PC-9 (cell line): ENCODE measurements at regions of chr9 and their contacts with region 1.

Region 1: DNA sequence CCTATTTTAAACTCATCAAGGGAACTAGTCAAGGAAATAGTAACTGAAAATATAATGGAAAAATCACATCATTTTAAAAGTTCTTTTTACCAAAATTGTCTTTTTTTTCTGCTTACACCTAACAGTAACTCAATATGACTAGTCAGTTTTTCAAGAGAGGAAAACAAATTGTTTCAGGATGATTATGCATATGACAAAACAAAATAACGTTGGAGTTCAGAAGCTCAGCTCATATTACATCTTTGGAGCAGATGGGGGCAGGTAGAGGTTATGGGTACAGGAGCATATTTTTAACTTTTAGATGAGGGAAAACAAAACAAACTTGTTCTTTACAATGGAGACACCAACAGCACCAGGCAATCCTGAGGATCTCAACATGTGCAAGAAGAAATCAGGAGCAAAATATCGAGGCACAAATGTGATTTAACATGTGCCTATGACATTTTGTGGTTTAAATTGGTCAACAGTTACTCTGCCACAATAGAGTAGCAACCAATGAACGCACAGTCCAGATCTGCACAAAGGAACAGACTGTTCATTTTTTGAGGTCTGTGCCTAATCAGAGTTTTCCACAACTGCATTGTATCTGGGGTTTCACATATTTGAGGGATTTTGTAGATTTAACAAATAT is 659.0 kb downstream of the ANXA1 start:
- DNase-seq: no peak
- H3K4me3 ChIP-seq: no peak overlapping the region
- H3K27ac ChIP-seq: no peak overlapping the region
- H3K4me1 ChIP-seq: no peaks in the 10 kb centered on the region; the same call in 1 of the 2 replicates
- H3K27me3 ChIP-seq: no peaks in the 10 kb centered on the region
- CTCF ChIP-seq: no peak

Region 2: GRCh38 chr9:73243078-73243477 is 567.6 kb before region 1 on chr9:
- CTCF ChIA-PET with region 1: no interaction called
- POLR2A ChIA-PET with region 1: no interaction called
- intact Hi-C with region 1: no loop called
- DNase-seq: no peak
- H3K4me3 ChIP-seq: no peak overlapping the region
- H3K27ac ChIP-seq: no peak overlapping the region
- H3K4me1 ChIP-seq: no peaks in the 10 kb centered on the region
- H3K27me3 ChIP-seq: no peaks in the 10 kb centered on the region
- CTCF ChIP-seq: no peak

Region 3: GRCh38 chr9:73701415-73702057 is 109.2 kb before region 1 on chr9:
- CTCF ChIA-PET with region 1: no interaction called
- POLR2A ChIA-PET with region 1: no interaction called
- intact Hi-C with region 1: loop called (anchors 10 kb)
- DNase-seq: no peak
- H3K4me3 ChIP-seq: no peak overlapping the region
- H3K27ac ChIP-seq: no peak overlapping the region
- H3K4me1 ChIP-seq: no peaks in the 10 kb centered on the region
- H3K27me3 ChIP-seq: no peaks in the 10 kb centered on the region
- CTCF ChIP-seq: no peak